ENCODE measurements at regions of chr13 and their contacts with region 1.

Region 1: GRCh38 chr13:79480954-79481684 is at the start of gene NDFIP2:
- DNase-seq: peak; percentile 80 to 94 (median 90)
- ATAC-seq: peak; percentile 81 to 95 (median 94)
- H3K4me3 ChIP-seq: peak within 1 kb of the TSS; percentile 56 to 96 (median 88)
- H3K27ac ChIP-seq: peak within 1 kb of the TSS; percentile 36 to 87 (median 78)
- H3K4me1 ChIP-seq: peaks cover 0 to 40% (median 26%) of the 10 kb centered on the region in 12 donors
- H3K27me3 ChIP-seq: peaks cover 0 to 4% (median 0%) of the 10 kb centered on the region in 9 donors
- CTCF ChIP-seq: peak in 2 of 12 donors; percentile 6 to 12
- POLR2A ChIP-seq: peak in 1 of 2 donors; percentile 73
- total RNA-seq, gene NDFIP2: 21.8 to 42.6 (median 32.4) TPM

Region 2: DNA sequence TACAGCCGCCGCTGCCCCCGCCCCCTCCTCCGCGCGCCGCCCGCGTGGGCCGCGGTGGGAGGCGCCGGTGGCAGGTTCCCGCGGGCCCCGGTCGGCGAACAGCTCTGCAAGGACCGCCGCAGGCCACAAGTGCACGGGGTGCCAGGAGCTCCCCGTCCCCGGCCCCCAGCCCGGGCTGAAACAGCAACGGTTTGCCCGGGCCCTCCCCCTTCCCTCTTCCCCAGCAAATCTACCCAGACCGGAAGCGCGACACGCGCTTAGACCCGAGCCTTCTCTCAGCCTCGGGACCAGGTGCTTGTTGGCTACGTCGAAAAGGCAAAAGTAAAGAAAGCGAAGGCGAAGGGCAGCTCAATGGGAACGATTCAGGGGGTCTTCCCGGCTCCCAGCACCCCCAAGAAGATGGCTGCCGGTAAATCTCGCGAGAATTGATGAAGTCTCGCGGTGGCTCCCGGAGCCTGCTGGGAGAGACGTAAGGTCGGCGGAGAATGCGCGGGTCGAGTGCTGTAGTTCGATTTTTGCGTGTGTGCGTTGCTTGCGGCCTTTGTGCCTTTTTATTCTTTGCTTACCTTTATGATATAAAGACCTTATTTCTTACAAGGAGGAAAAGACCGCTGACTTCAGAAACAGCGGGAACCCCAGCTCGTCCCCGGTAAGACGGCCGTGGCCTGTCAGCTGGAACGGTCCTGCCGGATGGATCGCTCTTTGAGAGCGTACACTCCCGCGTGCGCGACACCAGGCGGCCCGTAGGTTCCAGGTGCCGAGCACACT is 75.1 kb before region 1 on chr13 and contains the start of gene RBM26:
- intact Hi-C with region 1: loop called in 1 of 10 experiments (anchors 5 kb)
- DNase-seq: peak; percentile 94 to 96 (median 95)
- ATAC-seq: peak; percentile 92 to 94 (median 94)
- H3K4me3 ChIP-seq: peak within 1 kb of the TSS; percentile 68 to 92 (median 84)
- H3K27ac ChIP-seq: peak within 1 kb of the TSS; percentile 90 to 98 (median 96)
- H3K4me1 ChIP-seq: peaks cover 3 to 53% (median 45%) of the 10 kb centered on the region in 12 donors
- H3K27me3 ChIP-seq: no peaks in the 10 kb centered on the region
- CTCF ChIP-seq: peak in 2 of 12 donors; percentile 7 to 18
- POLR2A ChIP-seq: peak in 1 of 2 donors; percentile 49
- total RNA-seq, gene RBM26: 16.9 to 28.4 (median 21.0) TPM

Region 3: DNA sequence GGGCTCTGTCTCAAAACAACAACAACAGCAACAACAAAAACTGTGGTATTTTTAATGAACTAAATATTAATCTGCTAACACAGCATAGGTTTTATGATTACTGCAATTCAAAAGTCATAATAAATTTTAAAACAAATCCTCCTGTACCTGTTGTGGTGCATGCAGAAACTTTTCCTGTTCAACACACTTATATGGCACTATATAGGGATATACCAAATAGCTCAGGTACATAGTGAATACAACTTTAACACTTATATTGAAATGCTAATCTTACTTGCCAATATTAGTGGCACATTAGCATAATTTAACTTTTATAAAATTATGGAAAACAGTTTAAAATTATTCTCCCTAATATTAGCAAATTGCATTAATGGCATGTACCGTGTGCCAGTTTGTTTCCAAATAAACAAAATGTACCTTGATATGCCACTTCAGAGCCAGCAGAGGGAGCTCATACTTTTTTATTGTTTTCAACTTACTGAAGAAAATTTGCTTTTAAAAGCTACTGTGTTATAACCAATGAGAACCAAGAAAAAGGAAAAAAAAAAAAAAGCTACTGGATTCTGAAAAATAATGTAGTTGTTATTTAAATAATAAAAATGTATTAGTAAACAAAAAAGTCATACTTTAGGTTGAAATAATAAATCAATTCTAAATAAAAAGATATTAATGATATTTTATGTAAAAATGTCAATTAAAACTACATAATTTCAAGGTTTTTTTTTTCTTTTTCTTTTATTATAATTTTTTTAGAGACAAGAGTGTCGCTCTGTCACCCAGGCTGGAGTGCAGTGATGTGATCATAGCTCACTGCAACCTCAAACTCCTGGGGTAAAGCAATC is 57.1 kb before region 1 on chr13:
- intact Hi-C with region 1: loop called in 7 of 10 experiments (anchors 5 to 10 kb)
- DNase-seq: no peak
- ATAC-seq: peak in 2 of 4 donors; percentile 37 to 41
- H3K4me3 ChIP-seq: no peak overlapping the region
- H3K27ac ChIP-seq: no peak overlapping the region
- H3K4me1 ChIP-seq: peaks cover 0 to 3% (median 0%) of the 10 kb centered on the region in 12 donors
- H3K27me3 ChIP-seq: no peaks in the 10 kb centered on the region
- CTCF ChIP-seq: peak; percentile 52 to 81 (median 70)
- POLR2A ChIP-seq: no peak

Region 4: DNA sequence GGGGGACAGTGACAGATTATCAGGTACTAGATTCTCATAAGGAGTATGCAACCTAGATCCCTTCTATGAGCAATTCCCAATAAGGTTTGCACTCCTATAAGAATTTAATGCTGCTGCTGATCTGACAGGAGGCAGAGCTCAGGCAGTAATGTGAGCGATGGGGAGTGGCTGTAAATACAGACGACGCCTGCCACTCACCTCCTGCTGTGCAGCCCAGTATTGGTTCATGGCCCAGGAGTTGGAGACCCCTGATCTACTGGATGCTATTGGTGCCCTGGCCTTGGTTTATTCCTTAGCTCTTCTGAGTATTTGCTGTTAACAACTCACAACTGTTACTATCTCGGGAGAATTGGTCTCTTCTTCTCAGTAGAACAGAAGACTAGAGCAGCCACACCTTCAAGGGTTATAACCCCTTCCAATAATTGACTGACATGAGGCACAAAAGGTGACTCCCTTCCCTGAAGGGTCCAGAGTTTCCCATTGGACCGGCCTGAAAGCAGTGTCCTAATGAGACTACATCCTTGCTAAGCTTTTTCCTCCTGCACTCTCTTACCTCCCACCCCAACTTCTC is 40.1 kb before region 1 on chr13:
- intact Hi-C with region 1: no loop called
- DNase-seq: no peak
- ATAC-seq: no peak
- H3K4me3 ChIP-seq: no peak overlapping the region
- H3K27ac ChIP-seq: no peak overlapping the region
- H3K4me1 ChIP-seq: no peaks in the 10 kb centered on the region
- H3K27me3 ChIP-seq: no peaks in the 10 kb centered on the region
- CTCF ChIP-seq: no peak
- POLR2A ChIP-seq: no peak

Region 5: DNA sequence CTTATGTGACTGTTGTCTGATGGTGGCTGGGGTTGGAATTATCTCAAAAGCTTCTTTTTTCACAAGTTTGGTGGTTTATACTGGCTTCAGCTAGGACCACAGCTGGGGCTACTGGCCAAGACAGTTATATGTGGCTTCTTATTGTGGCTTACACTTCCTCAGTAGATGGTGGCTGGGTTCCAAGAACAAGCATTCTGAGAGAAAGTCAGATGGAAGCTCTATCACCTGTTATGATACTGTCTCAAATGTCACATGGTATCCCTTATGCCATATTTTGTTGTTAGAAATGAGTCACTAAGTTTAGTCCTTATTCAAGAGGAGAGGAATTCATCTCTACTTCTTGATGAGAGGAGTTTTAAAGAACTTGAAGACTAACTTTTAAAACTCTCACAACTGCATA is 41.5 kb after region 1 on chr13:
- intact Hi-C with region 1: loop called in 2 of 10 experiments (anchors 5 kb)
- DNase-seq: no peak
- ATAC-seq: no peak
- H3K4me3 ChIP-seq: no peak overlapping the region
- H3K27ac ChIP-seq: no peak overlapping the region
- H3K4me1 ChIP-seq: peaks cover 0 to 27% (median 4%) of the 10 kb centered on the region in 12 donors
- H3K27me3 ChIP-seq: no peaks in the 10 kb centered on the region
- CTCF ChIP-seq: no peak
- POLR2A ChIP-seq: no peak

Region 6: DNA sequence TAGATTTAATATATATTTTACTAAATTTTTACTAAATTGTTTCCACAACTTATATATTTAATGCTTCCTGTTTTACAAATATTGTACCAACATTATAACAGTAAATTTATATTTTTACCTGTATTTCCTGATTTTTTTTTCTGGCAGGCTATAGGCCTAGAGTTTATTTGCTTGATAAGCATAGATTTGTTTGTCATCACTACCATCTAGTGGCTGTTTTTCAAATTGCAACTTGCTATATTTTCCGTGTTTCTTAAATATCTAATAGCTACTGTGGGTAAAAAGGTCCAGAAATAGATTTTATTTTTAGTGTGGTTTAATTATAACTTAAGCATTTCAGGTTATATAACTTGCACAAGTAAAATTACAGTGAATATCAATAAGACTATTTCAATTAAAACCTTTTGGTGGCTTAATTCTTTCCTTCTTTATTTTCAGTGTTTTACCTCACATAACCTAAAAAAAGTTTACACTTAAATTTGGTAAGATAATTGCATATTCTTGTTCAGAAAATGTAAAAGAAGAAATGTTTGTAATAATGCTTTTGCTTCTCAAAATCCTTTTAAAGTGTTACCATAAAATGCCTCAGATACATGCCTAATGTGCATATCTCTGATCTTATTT is 60.4 kb after region 1 on chr13:
- intact Hi-C with region 1: loop called in 6 of 10 experiments (anchors 2 to 10 kb)
- DNase-seq: no peak
- ATAC-seq: no peak
- H3K4me3 ChIP-seq: no peak overlapping the region
- H3K27ac ChIP-seq: no peak overlapping the region
- H3K4me1 ChIP-seq: peaks cover 0 to 7% (median 0%) of the 10 kb centered on the region in 12 donors
- H3K27me3 ChIP-seq: no peaks in the 10 kb centered on the region
- CTCF ChIP-seq: peak; percentile 78 to 93 (median 84)
- POLR2A ChIP-seq: no peak